CD8-positive, alpha-beta T cell (primary cell): ENCODE measurements at regions of chr17 and their contacts with region 1.

Region 1: GRCh38 chr17:35540589-35541404 is 3.3 kb upstream of the SLFN12L start:
- DNase-seq: peak in 7 of 9 experiments; percentile 17 to 76 (median 47)
- ATAC-seq: peak; percentile 34
- H3K4me3 ChIP-seq: peak overlapping the region; percentile 56 to 59
- H3K4me3 Mint-ChIP-seq: peak overlapping the region; percentile 88
- H3K27ac ChIP-seq: peak overlapping the region; percentile 63 to 89
- H3K27ac Mint-ChIP-seq: peak overlapping the region; percentile 93
- H3K4me1 ChIP-seq: peaks cover 31% of the 10 kb centered on the region
- H3K4me1 Mint-ChIP-seq: peaks cover 49% of the 10 kb centered on the region
- H3K27me3 ChIP-seq: no peaks in the 10 kb centered on the region
- H3K27me3 Mint-ChIP-seq: no peaks in the 10 kb centered on the region
- CTCF ChIP-seq: no peak

Region 2: GRCh38 chr17:35170968-35171771 is 369.6 kb before region 1 on chr17:
- CTCF ChIA-PET with region 1: interaction called, 49 read pairs
- POLR2A ChIA-PET with region 1: interaction called, 7 read pairs
- intact Hi-C with region 1: loop called (anchors 1 kb)
- DNase-seq: peak in 5 of 9 experiments; percentile 31 to 70 (median 62)
- ATAC-seq: peak; percentile 79
- H3K4me3 ChIP-seq: peak overlapping the region; percentile 10 to 31
- H3K4me3 Mint-ChIP-seq: peak overlapping the region; percentile 57
- H3K27ac ChIP-seq: peak overlapping the region in 1 of 2 experiments; percentile 51
- H3K27ac Mint-ChIP-seq: peak overlapping the region; percentile 90
- H3K4me1 ChIP-seq: peaks cover 37% of the 10 kb centered on the region
- H3K4me1 Mint-ChIP-seq: peaks cover 46% of the 10 kb centered on the region
- H3K27me3 ChIP-seq: no peaks in the 10 kb centered on the region
- H3K27me3 Mint-ChIP-seq: no peaks in the 10 kb centered on the region
- CTCF ChIP-seq: peak; percentile 69

Region 3: DNA sequence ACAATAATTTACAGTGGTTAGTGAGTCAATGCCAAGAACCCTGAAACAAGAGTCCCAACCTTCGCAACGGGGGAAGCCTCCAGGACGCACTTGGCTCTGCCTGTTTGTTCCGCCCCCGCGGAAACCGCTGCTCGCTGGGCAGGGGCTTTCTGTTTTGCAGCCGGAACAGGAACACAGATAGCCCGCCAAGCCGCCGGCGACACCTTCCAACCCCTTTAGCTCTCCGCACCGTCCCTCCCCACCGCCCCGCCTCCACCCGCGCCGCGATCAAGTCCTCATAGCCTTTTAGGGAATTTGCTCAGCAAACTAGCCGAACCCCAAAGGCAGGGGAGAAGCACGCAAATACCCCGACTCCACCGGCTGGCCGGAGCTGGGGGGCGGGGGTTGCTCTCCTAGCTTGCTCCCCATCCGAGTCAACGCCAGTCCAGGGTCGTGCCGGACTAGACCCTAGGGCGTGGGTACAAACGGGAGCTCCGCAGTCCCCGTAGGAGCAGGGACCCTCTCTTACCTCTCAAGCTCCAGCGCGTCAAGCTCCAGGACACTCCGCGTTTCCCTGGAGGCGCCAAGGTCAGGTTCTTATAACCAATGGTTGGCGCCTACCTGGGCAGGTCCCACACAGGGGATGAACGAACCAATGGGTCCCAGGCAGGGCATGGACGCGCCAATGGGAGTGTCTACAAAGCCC is 92.4 kb before region 1 on chr17 and contains the start of gene SLFN13:
- CTCF ChIA-PET with region 1: interaction called, 4 read pairs
- POLR2A ChIA-PET with region 1: interaction called, 3 read pairs
- intact Hi-C with region 1: loop called in 1 of 2 experiments (anchors 5 kb)
- DNase-seq: peak; percentile 58 to 93 (median 84)
- ATAC-seq: peak; percentile 90
- H3K4me3 ChIP-seq: peak within 1 kb of the TSS; percentile 57 to 70
- H3K4me3 Mint-ChIP-seq: peak within 1 kb of the TSS; percentile 87
- H3K27ac ChIP-seq: peak within 1 kb of the TSS; percentile 51 to 58
- H3K27ac Mint-ChIP-seq: peak within 1 kb of the TSS; percentile 93
- H3K4me1 ChIP-seq: peaks cover 16% of the 10 kb centered on the region
- H3K4me1 Mint-ChIP-seq: peaks cover 19% of the 10 kb centered on the region
- H3K27me3 ChIP-seq: no peaks in the 10 kb centered on the region
- H3K27me3 Mint-ChIP-seq: no peaks in the 10 kb centered on the region
- CTCF ChIP-seq: no peak
- total RNA-seq, gene SLFN13: 16.1 to 17.3 TPM

Region 4: GRCh38 chr17:35519439-35519838 is 21.4 kb before region 1 on chr17:
- CTCF ChIA-PET with region 1: interaction called, 6 read pairs
- POLR2A ChIA-PET with region 1: interaction called, 10 read pairs
- intact Hi-C with region 1: loop called in 1 of 2 experiments (anchors 2 kb)
- DNase-seq: peak in 2 of 9 experiments; percentile 51 to 71
- ATAC-seq: peak; percentile 32
- H3K4me3 ChIP-seq: no peak overlapping the region
- H3K4me3 Mint-ChIP-seq: peak overlapping the region; percentile 64
- H3K27ac ChIP-seq: peak overlapping the region in 1 of 2 experiments; percentile 77
- H3K27ac Mint-ChIP-seq: peak overlapping the region; percentile 86
- H3K4me1 ChIP-seq: peaks cover 67% of the 10 kb centered on the region
- H3K4me1 Mint-ChIP-seq: peaks cover 93% of the 10 kb centered on the region
- H3K27me3 ChIP-seq: no peaks in the 10 kb centered on the region
- H3K27me3 Mint-ChIP-seq: no peaks in the 10 kb centered on the region
- CTCF ChIP-seq: no peak

Region 5: GRCh38 chr17:35568541-35568940 is 27.7 kb after region 1 on chr17:
- CTCF ChIA-PET with region 1: interaction called, 4 read pairs
- POLR2A ChIA-PET with region 1: interaction called, 3 read pairs
- intact Hi-C with region 1: loop called in 1 of 2 experiments (anchors 2 kb)
- DNase-seq: peak in 3 of 9 experiments; percentile 15 to 54 (median 39)
- ATAC-seq: peak; percentile 28
- H3K4me3 ChIP-seq: peak overlapping the region; percentile 85 to 97
- H3K4me3 Mint-ChIP-seq: peak overlapping the region; percentile 91
- H3K27ac ChIP-seq: peak overlapping the region; percentile 83 to 88
- H3K27ac Mint-ChIP-seq: peak overlapping the region; percentile 96
- H3K4me1 ChIP-seq: peaks cover 21% of the 10 kb centered on the region
- H3K4me1 Mint-ChIP-seq: peaks cover 31% of the 10 kb centered on the region
- H3K27me3 ChIP-seq: no peaks in the 10 kb centered on the region
- H3K27me3 Mint-ChIP-seq: no peaks in the 10 kb centered on the region
- CTCF ChIP-seq: no peak

Region 6: GRCh38 chr17:35587074-35587971 is 46.5 kb after region 1 on chr17 and contains the start of gene AP2B1:
- CTCF ChIA-PET with region 1: interaction called, 3 read pairs
- POLR2A ChIA-PET with region 1: no interaction called
- intact Hi-C with region 1: loop called in 1 of 2 experiments (anchors 1 kb)
- DNase-seq: peak; percentile 96 to 100 (median 97)
- ATAC-seq: peak; percentile 98
- H3K4me3 ChIP-seq: peak within 1 kb of the TSS; percentile 84 to 92
- H3K4me3 Mint-ChIP-seq: peak within 1 kb of the TSS; percentile 99
- H3K27ac ChIP-seq: peak within 1 kb of the TSS; percentile 86 to 93
- H3K27ac Mint-ChIP-seq: peak within 1 kb of the TSS; percentile 98
- H3K4me1 ChIP-seq: peaks cover 21% of the 10 kb centered on the region
- H3K4me1 Mint-ChIP-seq: peaks cover 38% of the 10 kb centered on the region
- H3K27me3 ChIP-seq: no peaks in the 10 kb centered on the region
- H3K27me3 Mint-ChIP-seq: no peaks in the 10 kb centered on the region
- CTCF ChIP-seq: no peak
- total RNA-seq, gene AP2B1: 58.7 to 65.7 TPM

Region 7: GRCh38 chr17:35641032-35641431 is 100.2 kb after region 1 on chr17:
- CTCF ChIA-PET with region 1: no interaction called
- POLR2A ChIA-PET with region 1: no interaction called
- intact Hi-C with region 1: no loop called
- DNase-seq: no peak
- ATAC-seq: no peak
- H3K4me3 ChIP-seq: no peak overlapping the region
- H3K4me3 Mint-ChIP-seq: no peak overlapping the region
- H3K27ac ChIP-seq: no peak overlapping the region
- H3K27ac Mint-ChIP-seq: no peak overlapping the region
- H3K4me1 ChIP-seq: no peaks in the 10 kb centered on the region
- H3K4me1 Mint-ChIP-seq: peaks cover 1% of the 10 kb centered on the region
- H3K27me3 ChIP-seq: no peaks in the 10 kb centered on the region
- H3K27me3 Mint-ChIP-seq: no peaks in the 10 kb centered on the region
- CTCF ChIP-seq: no peak